CD8-positive, alpha-beta memory T cell (primary cell): ENCODE measurements at regions of chr17 and their contacts with region 1.

Region 1: GRCh38 chr17:1861391-1862010 is 31.7 kb downstream of the RPA1 start:
- DNase-seq: no peak
- H3K4me3 ChIP-seq: no peak overlapping the region
- H3K4me3 Mint-ChIP-seq: no peak overlapping the region
- H3K27ac ChIP-seq: no peak overlapping the region
- H3K27ac Mint-ChIP-seq: peak overlapping the region in 1 of 8 donors; percentile 54
- H3K4me1 ChIP-seq: no peaks in the 10 kb centered on the region
- H3K4me1 Mint-ChIP-seq: peaks cover 0 to 4% (median 0%) of the 10 kb centered on the region in 3 donors
- H3K27me3 ChIP-seq: no peaks in the 10 kb centered on the region
- H3K27me3 Mint-ChIP-seq: no peaks in the 10 kb centered on the region

Region 2: GRCh38 chr17:1709403-1709891 is 152.1 kb before region 1 on chr17:
- CTCF ChIA-PET with region 1: interaction called, 5 read pairs
- POLR2A ChIA-PET with region 1: interaction called, 11 read pairs
- DNase-seq: no peak
- H3K4me3 ChIP-seq: no peak overlapping the region
- H3K4me3 Mint-ChIP-seq: peak overlapping the region in 5 of 7 donors; percentile 37 to 80 (median 59)
- H3K27ac ChIP-seq: no peak overlapping the region
- H3K27ac Mint-ChIP-seq: peak overlapping the region in 1 of 8 donors; percentile 42
- H3K4me1 ChIP-seq: peaks cover 5% of the 10 kb centered on the region
- H3K4me1 Mint-ChIP-seq: peaks cover 16 to 28% (median 25%) of the 10 kb centered on the region in 3 donors
- H3K27me3 ChIP-seq: peaks cover 2% of the 10 kb centered on the region
- H3K27me3 Mint-ChIP-seq: peaks cover 19 to 25% of the 10 kb centered on the region in 2 donors